WTC11 (cell line): ENCODE measurements at regions of chr2 and their contacts with region 1.

Region 1: GRCh38 chr2:176554101-176555048 is 285.1 kb downstream of the MTX2 start:
- DNase-seq: no peak
- ATAC-seq: peak; percentile 35; the same call in 1 of the 2 replicates
- H3K4me3 Mint-ChIP-seq: peak overlapping the region; percentile 61
- H3K27ac Mint-ChIP-seq: no peak overlapping the region
- H3K4me1 Mint-ChIP-seq: peaks cover 22% of the 10 kb centered on the region
- H3K27me3 Mint-ChIP-seq: peaks cover 43% of the 10 kb centered on the region
- CTCF ChIP-seq: no peak; the same call in 1 of the 2 replicates

Region 2: GRCh38 chr2:176445956-176446355 is 108.4 kb before region 1 on chr2:
- CTCF ChIA-PET with region 1: interaction called, 15 read pairs
- POLR2A ChIA-PET with region 1: no interaction called
- DNase-seq: no peak
- ATAC-seq: no peak
- H3K4me3 Mint-ChIP-seq: no peak overlapping the region
- H3K27ac Mint-ChIP-seq: no peak overlapping the region
- H3K4me1 Mint-ChIP-seq: peaks cover 29% of the 10 kb centered on the region
- H3K27me3 Mint-ChIP-seq: peaks cover 17% of the 10 kb centered on the region
- CTCF ChIP-seq: no peak

Region 3: DNA sequence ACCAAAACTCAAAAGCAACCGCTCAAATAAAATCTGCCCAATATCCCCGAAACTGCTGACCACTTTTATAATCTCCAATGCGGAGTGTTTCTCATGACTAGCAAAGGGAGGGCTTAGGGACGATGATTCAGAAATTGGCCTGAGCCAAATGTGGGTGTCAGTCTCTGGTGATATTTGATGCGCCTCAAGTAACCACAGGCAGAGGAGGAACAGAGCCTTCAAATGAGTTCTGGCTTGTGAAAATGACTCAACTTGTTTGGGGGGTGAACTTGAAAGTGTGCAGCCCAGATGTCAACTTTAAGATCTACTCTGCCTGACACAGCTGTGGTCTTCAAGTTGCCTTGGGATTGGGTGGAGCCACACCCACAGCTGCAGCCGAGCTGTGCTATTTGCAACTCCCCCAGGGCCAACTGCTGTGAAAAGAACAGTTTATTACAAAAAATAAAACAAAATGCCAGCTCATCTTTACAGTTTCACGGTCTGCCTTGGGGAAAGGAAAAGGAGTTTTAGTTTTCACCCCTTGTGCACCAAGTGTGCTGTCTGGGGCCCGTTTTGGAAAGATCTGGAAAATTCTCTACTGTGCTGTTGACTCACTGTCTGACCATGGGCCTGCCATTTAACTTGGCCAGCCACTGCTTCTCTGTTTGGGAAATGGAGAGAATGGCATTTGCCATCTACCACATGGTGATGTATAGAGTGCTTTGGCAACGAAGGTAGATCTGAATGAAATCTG is 63.0 kb before region 1 on chr2:
- CTCF ChIA-PET with region 1: interaction called, 22 read pairs
- POLR2A ChIA-PET with region 1: no interaction called
- DNase-seq: no peak
- ATAC-seq: no peak
- H3K4me3 Mint-ChIP-seq: no peak overlapping the region
- H3K27ac Mint-ChIP-seq: no peak overlapping the region
- H3K4me1 Mint-ChIP-seq: peaks cover 24% of the 10 kb centered on the region
- H3K27me3 Mint-ChIP-seq: peaks cover 47% of the 10 kb centered on the region
- CTCF ChIP-seq: no peak

Region 4: GRCh38 chr2:176534798-176535466 is 19.4 kb before region 1 on chr2:
- CTCF ChIA-PET with region 1: interaction called, 18 read pairs
- POLR2A ChIA-PET with region 1: no interaction called
- DNase-seq: no peak
- ATAC-seq: peak; percentile 36
- H3K4me3 Mint-ChIP-seq: no peak overlapping the region
- H3K27ac Mint-ChIP-seq: no peak overlapping the region
- H3K4me1 Mint-ChIP-seq: peaks cover 9% of the 10 kb centered on the region
- H3K27me3 Mint-ChIP-seq: peaks cover 8% of the 10 kb centered on the region
- CTCF ChIP-seq: no peak

Region 5: DNA sequence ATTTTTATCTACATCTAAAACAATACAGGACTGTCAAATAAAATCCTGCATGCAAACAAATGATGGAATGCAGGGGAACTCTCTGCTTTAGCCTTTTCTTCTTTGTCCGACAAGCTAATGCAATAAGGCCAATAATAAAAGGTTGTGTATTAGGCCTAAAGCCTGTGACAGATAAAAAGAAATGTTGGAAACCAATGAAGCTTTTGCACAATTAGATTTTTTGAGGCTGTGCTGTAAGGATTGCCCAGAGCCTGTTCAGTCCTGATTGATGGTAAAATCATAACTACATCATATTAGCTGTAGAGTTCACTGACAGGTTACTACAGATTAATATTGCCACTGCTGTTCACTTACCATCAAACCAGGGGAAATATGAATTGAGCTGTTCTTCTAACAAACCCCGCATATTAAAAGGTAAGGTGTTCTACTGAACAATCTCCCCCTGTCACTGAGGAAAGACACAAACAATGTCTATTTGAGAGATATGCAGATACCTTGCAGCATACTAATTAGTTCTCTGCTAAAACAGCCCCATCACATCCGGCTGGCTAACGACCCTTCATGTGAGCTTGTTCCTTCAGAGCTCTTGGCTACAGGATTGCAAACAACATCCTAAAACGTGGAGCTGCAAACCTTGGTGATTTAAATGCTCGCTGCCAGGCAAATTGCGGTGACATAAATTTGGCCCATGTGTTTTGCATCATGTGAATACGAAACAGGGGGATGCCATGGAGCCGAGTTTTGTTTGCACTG is 20.3 kb after region 1 on chr2:
- CTCF ChIA-PET with region 1: interaction called, 15 read pairs
- POLR2A ChIA-PET with region 1: no interaction called
- DNase-seq: no peak
- ATAC-seq: no peak
- H3K4me3 Mint-ChIP-seq: no peak overlapping the region
- H3K27ac Mint-ChIP-seq: no peak overlapping the region
- H3K4me1 Mint-ChIP-seq: peaks cover 8% of the 10 kb centered on the region
- H3K27me3 Mint-ChIP-seq: no peaks in the 10 kb centered on the region
- CTCF ChIP-seq: no peak

Region 6: DNA sequence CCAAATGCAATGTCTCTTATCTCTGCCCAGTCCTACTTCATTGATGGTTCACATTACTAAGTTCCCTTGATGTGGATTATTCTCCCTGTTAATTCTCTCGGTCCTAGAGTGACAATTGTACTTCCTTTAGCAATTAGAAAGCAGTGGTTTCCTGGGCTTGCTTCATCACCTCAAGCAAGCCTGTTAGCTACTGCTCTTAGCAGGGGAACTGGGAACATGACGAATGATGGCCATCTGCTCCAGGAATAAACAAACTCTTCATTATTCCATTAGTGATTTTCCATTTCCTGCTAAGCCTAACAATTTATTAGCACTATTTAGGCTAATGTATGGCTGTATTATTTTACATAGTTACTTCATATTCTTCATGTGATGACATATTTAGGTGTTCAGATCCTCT is 46.7 kb after region 1 on chr2:
- CTCF ChIA-PET with region 1: no interaction called
- POLR2A ChIA-PET with region 1: no interaction called
- DNase-seq: no peak
- ATAC-seq: no peak
- H3K4me3 Mint-ChIP-seq: no peak overlapping the region
- H3K27ac Mint-ChIP-seq: no peak overlapping the region
- H3K4me1 Mint-ChIP-seq: peaks cover 17% of the 10 kb centered on the region
- H3K27me3 Mint-ChIP-seq: peaks cover 6% of the 10 kb centered on the region
- CTCF ChIP-seq: no peak

Region 7: GRCh38 chr2:176638167-176639015 is 84.0 kb after region 1 on chr2:
- CTCF ChIA-PET with region 1: interaction called, 16 read pairs
- POLR2A ChIA-PET with region 1: no interaction called
- DNase-seq: peak; percentile 59
- ATAC-seq: peak; percentile 70
- H3K4me3 Mint-ChIP-seq: peak overlapping the region; percentile 69
- H3K27ac Mint-ChIP-seq: no peak overlapping the region
- H3K4me1 Mint-ChIP-seq: peaks cover 20% of the 10 kb centered on the region
- H3K27me3 Mint-ChIP-seq: peaks cover 94% of the 10 kb centered on the region
- CTCF ChIP-seq: peak; percentile 73

Region 8: GRCh38 chr2:176710657-176711186 is 156.3 kb after region 1 on chr2:
- CTCF ChIA-PET with region 1: no interaction called
- POLR2A ChIA-PET with region 1: no interaction called
- DNase-seq: no peak
- ATAC-seq: no peak
- H3K4me3 Mint-ChIP-seq: no peak overlapping the region
- H3K27ac Mint-ChIP-seq: no peak overlapping the region
- H3K4me1 Mint-ChIP-seq: no peaks in the 10 kb centered on the region
- H3K27me3 Mint-ChIP-seq: no peaks in the 10 kb centered on the region
- CTCF ChIP-seq: no peak